ENCODE measurements at regions of chr13 and their contacts with region 1.

Region 1: DNA sequence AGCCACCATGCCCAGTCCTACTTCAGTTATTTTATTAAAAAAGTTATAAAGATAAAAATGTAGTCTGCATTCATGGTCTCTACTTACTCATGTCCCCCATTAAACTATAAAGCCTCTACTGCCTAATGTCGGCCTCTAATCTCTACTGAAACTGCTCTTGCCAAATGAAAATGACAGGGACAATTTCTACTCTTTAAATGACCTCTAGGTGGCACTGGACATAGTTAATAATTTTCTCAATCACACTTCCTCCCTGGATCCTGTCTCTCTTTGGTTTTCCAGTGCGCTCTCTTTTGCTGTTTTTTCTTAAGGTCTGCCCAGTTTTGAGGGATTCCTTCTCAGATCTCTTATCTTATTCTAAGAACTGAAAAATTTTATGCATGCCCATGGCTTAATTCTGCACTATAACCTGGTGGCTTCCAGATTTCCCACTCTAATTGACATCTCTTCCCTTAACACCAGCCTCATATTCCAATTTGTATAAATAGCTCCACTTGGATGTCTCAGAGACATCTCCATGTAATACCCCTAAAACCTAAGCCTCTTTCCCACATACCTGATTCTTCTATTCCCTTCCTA is 54.3 kb downstream of the MTMR6 start:
- DNase-seq: peak; percentile 60
- H3K4me3 ChIP-seq: no peak overlapping the region
- H3K27ac ChIP-seq: no peak overlapping the region
- H3K4me1 ChIP-seq: peaks cover 12% of the 10 kb centered on the region
- CTCF ChIP-seq: peak; percentile 83

Region 2: GRCh38 chr13:24982333-24982999 is 250.6 kb before region 1 on chr13:
- CTCF ChIA-PET with region 1: no interaction called
- POLR2A ChIA-PET with region 1: no interaction called
- intact Hi-C with region 1: no loop called
- DNase-seq: no peak
- H3K4me3 ChIP-seq: no peak overlapping the region
- H3K27ac ChIP-seq: no peak overlapping the region
- H3K4me1 ChIP-seq: no peaks in the 10 kb centered on the region
- CTCF ChIP-seq: no peak

Region 3: DNA sequence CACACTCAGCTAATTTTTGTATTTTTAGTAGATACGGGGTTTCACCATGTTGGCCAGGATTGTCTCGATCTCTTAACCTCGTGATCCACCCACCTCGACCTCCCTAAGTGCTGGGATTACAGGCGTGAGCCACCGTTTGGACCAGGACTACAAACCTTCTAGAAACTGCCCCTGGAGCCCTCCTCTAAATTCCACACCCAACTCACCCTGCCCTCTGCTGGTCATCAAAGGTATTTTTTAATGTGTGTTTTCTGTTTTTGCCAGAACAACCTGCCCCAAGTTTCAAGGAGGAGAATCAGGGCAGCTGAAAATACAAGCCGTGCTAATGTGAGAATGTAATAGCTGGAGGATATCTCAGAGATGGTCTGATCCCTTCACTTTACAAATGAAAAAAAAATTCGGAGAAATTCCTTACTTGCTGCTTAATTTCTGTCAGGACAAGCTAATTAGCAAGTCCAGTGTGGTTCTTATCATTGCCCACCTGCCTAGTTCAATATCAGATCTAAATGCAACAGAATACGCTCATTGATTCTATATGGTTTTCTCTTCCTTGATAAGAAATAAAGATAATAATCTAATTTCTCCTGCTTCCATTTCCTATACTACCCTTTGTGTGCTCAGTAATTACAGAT is 142.8 kb after region 1 on chr13:
- CTCF ChIA-PET with region 1: no interaction called
- POLR2A ChIA-PET with region 1: no interaction called
- intact Hi-C with region 1: loop called (anchors 1 kb)
- DNase-seq: peak; percentile 56
- H3K4me3 ChIP-seq: no peak overlapping the region
- H3K27ac ChIP-seq: no peak overlapping the region
- H3K4me1 ChIP-seq: no peaks in the 10 kb centered on the region
- CTCF ChIP-seq: peak; percentile 80